Activated CD4-positive, alpha-beta T cell treated with anti-CD3 and anti-CD28 coated beads for 36 hours (primary cell): ENCODE measurements at regions of chr1 and their contacts with region 1.

Region 1: DNA sequence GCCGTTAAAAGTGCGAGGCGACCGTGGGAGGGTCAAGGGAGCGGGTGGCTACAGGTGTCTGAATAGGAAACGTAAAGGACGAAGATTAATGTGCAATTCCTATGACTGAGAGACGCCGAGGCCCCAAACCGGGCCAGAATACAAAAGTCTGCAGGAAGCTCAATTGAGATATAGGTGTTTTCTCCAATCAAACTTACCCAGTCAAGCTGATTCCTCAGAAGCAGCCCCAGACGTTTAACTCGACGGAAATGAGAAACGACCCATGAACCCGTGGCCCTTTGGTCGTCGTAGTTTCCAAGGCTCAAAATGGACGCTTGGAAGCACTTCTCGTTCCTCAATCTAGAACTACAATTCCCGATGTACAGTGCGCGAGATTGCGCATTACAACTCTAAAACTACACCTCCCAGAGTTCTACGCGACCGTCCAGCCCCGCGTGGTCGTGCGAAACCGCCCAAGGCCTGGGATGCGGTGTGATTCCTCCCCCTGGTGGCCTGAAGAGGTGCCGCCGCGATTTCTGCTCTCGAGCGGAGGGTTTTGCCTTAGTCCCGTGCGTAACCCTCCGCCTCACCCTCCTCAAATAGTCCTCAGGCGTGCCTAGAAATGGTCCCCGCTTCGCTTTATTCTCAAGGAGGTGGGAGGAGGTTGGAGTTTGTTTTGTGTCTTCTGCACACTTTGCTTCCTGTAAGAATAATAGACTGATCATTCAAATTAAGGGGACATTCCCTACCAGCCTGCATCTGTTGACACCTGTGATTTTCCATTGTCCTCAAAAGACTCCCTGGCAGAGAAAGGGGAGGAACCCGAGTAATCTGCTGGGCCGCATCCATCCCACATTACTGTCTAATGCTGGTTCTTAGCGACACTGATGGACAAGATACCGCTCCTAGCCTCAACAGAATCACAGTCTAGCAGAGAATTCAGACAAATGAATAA is at the start of gene PAFAH2:
- DNase-seq: peak; percentile 99
- ATAC-seq: peak; percentile 98
- H3K4me3 Mint-ChIP-seq: peak within 1 kb of the TSS; percentile 98
- H3K27ac Mint-ChIP-seq: peak within 1 kb of the TSS; percentile 98
- H3K4me1 Mint-ChIP-seq: peaks cover 28% of the 10 kb centered on the region
- H3K27me3 Mint-ChIP-seq: no peaks in the 10 kb centered on the region
- total RNA-seq, gene PAFAH2: 6.6 to 7.9 TPM

Region 2: DNA sequence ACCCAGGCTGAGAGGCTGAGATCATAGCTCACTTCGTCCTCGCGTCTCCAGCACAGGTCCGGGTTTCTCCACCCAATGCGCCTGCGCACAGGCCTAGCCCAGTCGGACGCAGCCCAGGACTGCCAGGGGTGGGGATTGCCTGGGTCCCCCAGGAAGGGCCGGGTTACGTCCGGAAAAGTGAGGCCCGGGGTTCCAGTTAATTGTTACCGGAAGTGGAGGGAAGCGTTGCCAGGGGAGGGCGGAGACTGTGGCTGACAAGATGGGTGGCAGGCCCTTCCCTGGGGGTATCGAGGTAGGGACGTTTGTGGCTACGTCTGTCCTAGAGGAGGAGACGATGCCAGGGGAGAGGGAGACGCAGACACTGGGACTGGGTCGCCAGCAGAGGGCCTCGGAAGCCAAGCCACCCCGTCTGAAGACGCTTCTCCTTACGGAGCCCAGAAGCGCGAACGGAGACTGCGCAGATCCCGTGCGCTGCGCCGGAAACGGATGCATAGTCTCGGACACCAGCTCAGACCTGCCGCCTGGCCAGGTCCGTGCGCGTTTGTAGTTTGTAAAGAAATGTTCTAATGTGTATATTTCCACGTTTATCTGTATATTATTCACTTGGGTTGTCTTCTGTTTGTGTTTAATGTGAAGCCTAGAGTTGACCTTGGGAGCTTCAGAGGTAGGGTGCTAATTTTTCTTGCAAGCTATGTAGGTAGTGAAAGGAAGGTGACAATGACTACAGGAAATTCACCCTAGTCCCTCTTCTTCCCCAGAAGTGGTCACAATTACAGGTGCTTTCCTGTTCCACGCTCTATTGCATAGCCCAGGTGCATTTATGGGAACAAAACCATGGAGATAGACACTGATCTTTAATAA is 758.2 kb before region 1 on chr1:
- CTCF ChIA-PET with region 1: interaction called, 3 read pairs
- POLR2A ChIA-PET with region 1: interaction called, 3 read pairs
- intact Hi-C with region 1: loop called in 1 of 2 experiments (anchors 10 kb)
- DNase-seq: peak; percentile 96
- ATAC-seq: peak; percentile 91
- H3K4me3 Mint-ChIP-seq: peak overlapping the region; percentile 74
- H3K27ac Mint-ChIP-seq: peak overlapping the region; percentile 89
- H3K4me1 Mint-ChIP-seq: peaks cover 43% of the 10 kb centered on the region
- H3K27me3 Mint-ChIP-seq: no peaks in the 10 kb centered on the region

Region 3: GRCh38 chr1:25608488-25609178 is 389.5 kb before region 1 on chr1:
- CTCF ChIA-PET with region 1: interaction called, 3 read pairs
- POLR2A ChIA-PET with region 1: no interaction called
- intact Hi-C with region 1: loop called in 1 of 2 experiments (anchors 2 kb)
- DNase-seq: peak; percentile 95
- ATAC-seq: peak; percentile 99
- H3K4me3 Mint-ChIP-seq: no peak overlapping the region
- H3K27ac Mint-ChIP-seq: no peak overlapping the region
- H3K4me1 Mint-ChIP-seq: peaks cover 11% of the 10 kb centered on the region
- H3K27me3 Mint-ChIP-seq: peaks cover 6% of the 10 kb centered on the region

Region 4: GRCh38 chr1:25858906-25859789 is 138.9 kb before region 1 on chr1 and contains the start of gene AUNIP:
- CTCF ChIA-PET with region 1: no interaction called
- POLR2A ChIA-PET with region 1: no interaction called
- intact Hi-C with region 1: loop called in 1 of 2 experiments (anchors 1 kb)
- DNase-seq: peak; percentile 97
- ATAC-seq: peak; percentile 95
- H3K4me3 Mint-ChIP-seq: peak within 1 kb of the TSS; percentile 94
- H3K27ac Mint-ChIP-seq: peak within 1 kb of the TSS; percentile 93
- H3K4me1 Mint-ChIP-seq: peaks cover 13% of the 10 kb centered on the region
- H3K27me3 Mint-ChIP-seq: no peaks in the 10 kb centered on the region
- total RNA-seq, gene AUNIP: 9.6 to 12.9 TPM

Region 5: DNA sequence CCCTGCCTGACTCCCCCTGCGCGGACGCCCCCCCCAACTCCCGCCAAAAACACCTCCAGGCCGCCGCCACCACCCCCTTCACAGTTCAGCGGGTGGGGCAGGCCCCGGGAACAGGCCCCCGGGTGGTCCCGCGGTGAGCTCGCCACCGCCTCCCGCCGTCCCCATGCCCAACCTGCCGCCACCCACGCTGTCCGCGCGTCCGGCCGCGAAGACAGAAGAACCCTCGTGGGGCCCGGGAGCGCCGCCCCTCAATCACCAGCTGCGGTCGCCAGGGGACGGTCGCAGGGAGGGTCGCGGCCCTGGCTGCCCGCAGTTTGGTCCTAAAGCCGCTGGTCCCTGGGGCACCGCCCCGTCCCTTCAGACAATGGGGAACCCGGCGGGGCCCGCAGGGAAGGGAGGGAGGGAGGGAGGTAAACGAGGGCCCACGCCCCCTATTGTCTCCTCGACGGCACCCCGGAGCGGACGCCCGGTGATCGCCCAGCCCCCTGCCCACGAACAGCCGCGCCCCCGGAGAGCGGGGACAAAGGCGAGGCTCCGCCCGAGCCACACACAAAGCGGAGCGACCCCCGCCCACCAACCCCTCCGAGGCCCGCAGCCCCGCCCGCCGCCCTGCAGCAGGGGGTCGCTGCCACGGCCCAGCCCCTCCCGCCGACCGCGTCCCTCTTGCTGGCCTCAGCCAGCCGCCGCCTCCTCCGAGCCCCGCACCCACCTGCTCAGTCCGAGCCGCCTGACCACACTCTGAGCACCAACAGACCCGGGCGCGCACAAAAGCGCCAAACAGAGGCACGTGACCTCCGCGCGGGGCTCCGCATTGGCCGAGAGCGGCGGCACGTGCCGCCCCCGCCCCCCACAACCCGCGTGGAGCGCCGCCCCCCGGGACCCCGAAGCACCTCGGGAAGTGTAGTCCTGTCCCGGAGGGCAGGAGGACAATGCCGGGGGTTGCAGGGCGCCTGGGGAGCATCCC is 92.1 kb before region 1 on chr1 and contains the start of gene STMN1:
- CTCF ChIA-PET with region 1: interaction called, 257 read pairs
- POLR2A ChIA-PET with region 1: interaction called, 7 read pairs
- intact Hi-C with region 1: loop called (anchors 1 kb)
- DNase-seq: peak; percentile 96
- ATAC-seq: peak; percentile 81
- H3K4me3 Mint-ChIP-seq: peak within 1 kb of the TSS; percentile 84
- H3K27ac Mint-ChIP-seq: peak within 1 kb of the TSS; percentile 83
- H3K4me1 Mint-ChIP-seq: peaks cover 25% of the 10 kb centered on the region
- H3K27me3 Mint-ChIP-seq: no peaks in the 10 kb centered on the region
- total RNA-seq, gene STMN1: 557 to 771 TPM

Region 6: GRCh38 chr1:25933479-25934365 is 64.4 kb before region 1 on chr1:
- CTCF ChIA-PET with region 1: no interaction called
- POLR2A ChIA-PET with region 1: no interaction called
- intact Hi-C with region 1: no loop called
- DNase-seq: no peak
- ATAC-seq: no peak
- H3K4me3 Mint-ChIP-seq: no peak overlapping the region
- H3K27ac Mint-ChIP-seq: no peak overlapping the region
- H3K4me1 Mint-ChIP-seq: no peaks in the 10 kb centered on the region
- H3K27me3 Mint-ChIP-seq: no peaks in the 10 kb centered on the region

Region 7: GRCh38 chr1:26045722-26046248 is 47.7 kb after region 1 on chr1 and contains the start of gene SLC30A2:
- CTCF ChIA-PET with region 1: no interaction called
- POLR2A ChIA-PET with region 1: no interaction called
- intact Hi-C with region 1: no loop called
- DNase-seq: peak; percentile 22
- ATAC-seq: no peak
- H3K4me3 Mint-ChIP-seq: no peak within 1 kb of the TSS
- H3K27ac Mint-ChIP-seq: no peak within 1 kb of the TSS
- H3K4me1 Mint-ChIP-seq: peaks cover 2% of the 10 kb centered on the region
- H3K27me3 Mint-ChIP-seq: peaks cover 48% of the 10 kb centered on the region
- total RNA-seq, gene SLC30A2: not detected

Region 8: GRCh38 chr1:26233903-26234643 is 236.0 kb after region 1 on chr1 and contains the start of gene CEP85:
- CTCF ChIA-PET with region 1: interaction called, 3 read pairs
- POLR2A ChIA-PET with region 1: no interaction called
- intact Hi-C with region 1: loop called in 1 of 2 experiments (anchors 1 kb)
- DNase-seq: peak; percentile 99
- ATAC-seq: peak; percentile 95
- H3K4me3 Mint-ChIP-seq: peak within 1 kb of the TSS; percentile 99
- H3K27ac Mint-ChIP-seq: peak within 1 kb of the TSS; percentile 96
- H3K4me1 Mint-ChIP-seq: peaks cover 32% of the 10 kb centered on the region
- H3K27me3 Mint-ChIP-seq: no peaks in the 10 kb centered on the region
- total RNA-seq, gene CEP85: 31.1 to 31.9 TPM

Region 9: DNA sequence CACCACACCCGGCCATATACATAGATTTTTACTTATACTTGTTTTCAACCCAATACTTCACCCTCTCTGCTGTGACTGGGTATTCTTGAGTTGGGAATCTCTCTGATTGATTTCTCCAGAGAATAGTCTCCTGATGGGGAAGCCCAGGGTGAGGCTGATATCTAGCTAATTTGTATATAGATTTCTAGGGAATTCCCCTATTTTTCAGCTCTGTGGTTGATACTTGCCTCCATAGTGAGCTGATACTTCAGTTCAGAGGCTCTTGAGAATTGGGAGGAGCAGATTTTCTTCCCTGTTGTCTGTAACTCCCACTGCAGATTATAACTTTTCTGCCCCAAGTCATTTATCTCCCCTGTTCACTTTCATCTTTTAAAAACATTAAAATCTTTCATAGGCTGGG is 267.3 kb after region 1 on chr1:
- CTCF ChIA-PET with region 1: no interaction called
- POLR2A ChIA-PET with region 1: no interaction called
- intact Hi-C with region 1: no loop called
- DNase-seq: no peak
- ATAC-seq: peak; percentile 71
- H3K4me3 Mint-ChIP-seq: no peak overlapping the region
- H3K27ac Mint-ChIP-seq: no peak overlapping the region
- H3K4me1 Mint-ChIP-seq: peaks cover 7% of the 10 kb centered on the region
- H3K27me3 Mint-ChIP-seq: no peaks in the 10 kb centered on the region